Heart right ventricle (tissue), 16 donors: ENCODE measurements at regions of chr14 and their contacts with region 1.

Region 1: DNA sequence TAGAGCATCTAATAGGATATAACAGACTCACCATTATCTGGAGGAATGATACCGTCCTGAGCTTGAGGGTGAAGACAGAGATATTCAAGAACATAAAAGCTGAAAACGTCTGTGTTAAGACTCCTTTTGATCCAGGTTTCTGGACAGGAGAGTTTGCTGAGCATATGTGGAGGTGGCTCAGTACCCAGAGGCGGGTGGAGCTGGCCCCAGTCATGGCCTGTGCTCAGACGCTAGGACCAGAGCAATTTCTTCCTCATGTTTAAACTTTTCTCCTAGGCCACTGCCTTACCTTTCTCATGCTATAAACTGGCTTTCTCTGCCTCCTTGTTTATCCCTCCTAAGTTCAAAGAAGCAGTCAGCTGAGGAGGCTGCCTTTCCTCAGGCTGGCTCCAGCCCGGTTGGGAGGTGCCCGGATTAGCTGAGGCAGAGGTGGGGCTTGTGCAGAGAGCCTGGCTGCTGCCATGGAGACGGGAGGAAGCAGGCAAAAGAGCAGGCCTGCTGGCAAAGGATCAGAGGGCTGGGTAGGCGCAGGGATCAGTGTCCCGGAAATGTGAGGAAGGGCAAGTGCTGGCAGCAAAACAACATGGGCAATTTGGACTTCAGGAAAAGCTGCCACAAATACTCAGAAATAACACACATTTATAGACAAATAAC is 13.7 kb downstream of the COA8 start:
- DNase-seq: peak; percentile 86 to 92
- ATAC-seq: peak; percentile 93 to 98 (median 96)
- H3K4me3 ChIP-seq: peak overlapping the region in 1 of 10 donors; percentile 17
- H3K27ac ChIP-seq: peak overlapping the region in 9 of 10 donors; percentile 38 to 73 (median 60)
- H3K4me1 ChIP-seq: peaks cover 2 to 53% (median 25%) of the 10 kb centered on the region in 9 donors
- H3K27me3 ChIP-seq: no peaks in the 10 kb centered on the region
- CTCF ChIP-seq: no peak

Region 2: DNA sequence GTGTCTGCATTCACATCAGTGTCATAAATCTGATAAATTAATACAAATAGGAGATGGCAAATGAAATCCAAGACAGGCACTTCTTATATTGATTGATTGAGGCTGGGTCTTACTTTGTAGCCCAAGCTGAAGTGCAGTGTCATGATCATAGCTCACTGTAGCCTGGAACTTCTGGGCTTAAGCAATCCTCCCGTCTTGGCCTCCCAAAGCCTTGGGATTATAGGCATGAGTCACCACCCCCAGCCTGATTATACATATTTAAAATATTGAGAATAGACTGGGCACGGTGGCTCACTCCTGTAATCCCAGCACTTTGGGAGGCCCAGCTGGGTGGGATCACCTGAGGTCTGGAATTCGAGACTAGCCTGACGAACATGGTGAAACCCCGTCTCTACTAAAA is 140.0 kb before region 1 on chr14:
- intact Hi-C with region 1: no loop called
- DNase-seq: no peak
- ATAC-seq: no peak
- H3K4me3 ChIP-seq: no peak overlapping the region
- H3K27ac ChIP-seq: peak overlapping the region in 1 of 10 donors; percentile 37
- H3K4me1 ChIP-seq: peaks cover 3 to 61% (median 33%) of the 10 kb centered on the region in 9 donors
- H3K27me3 ChIP-seq: no peaks in the 10 kb centered on the region
- CTCF ChIP-seq: no peak

Region 3: GRCh38 chr14:103552011-103552845 is 24.3 kb before region 1 on chr14:
- intact Hi-C with region 1: no loop called
- DNase-seq: peak in 1 of 2 donors; percentile 49
- ATAC-seq: peak; percentile 12 to 63 (median 50)
- H3K4me3 ChIP-seq: peak overlapping the region in 5 of 10 donors; percentile 2 to 40 (median 30)
- H3K27ac ChIP-seq: peak overlapping the region; percentile 63 to 95 (median 88)
- H3K4me1 ChIP-seq: peaks cover 24 to 91% (median 63%) of the 10 kb centered on the region in 9 donors
- H3K27me3 ChIP-seq: no peaks in the 10 kb centered on the region
- CTCF ChIP-seq: no peak

Region 4: DNA sequence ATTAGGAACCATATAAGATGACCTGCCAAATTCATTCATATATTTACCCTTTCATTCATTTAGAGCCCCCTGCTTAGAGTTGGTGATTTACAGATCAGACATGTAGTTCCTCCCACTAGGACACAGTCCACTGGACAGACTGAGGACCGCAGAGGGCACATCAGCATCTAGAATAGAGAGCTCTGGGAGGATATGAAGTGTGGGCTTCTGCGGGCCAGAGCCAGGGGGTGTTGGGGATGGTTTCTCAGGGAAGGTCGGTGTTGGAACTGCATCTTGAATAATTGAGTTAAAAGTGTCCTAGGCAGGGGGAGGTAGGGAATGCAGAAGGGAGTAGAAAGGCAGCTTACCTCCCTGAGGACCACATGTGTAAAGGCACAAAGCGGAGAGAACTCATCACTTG is 95.4 kb after region 1 on chr14:
- intact Hi-C with region 1: loop called in 3 of 10 experiments (anchors 5 to 10 kb)
- DNase-seq: no peak
- ATAC-seq: no peak
- H3K4me3 ChIP-seq: no peak overlapping the region
- H3K27ac ChIP-seq: no peak overlapping the region
- H3K4me1 ChIP-seq: peaks cover 0 to 8% (median 0%) of the 10 kb centered on the region in 9 donors
- H3K27me3 ChIP-seq: no peaks in the 10 kb centered on the region
- CTCF ChIP-seq: no peak

Region 5: GRCh38 chr14:103688906-103689902 is 112.7 kb after region 1 on chr14:
- intact Hi-C with region 1: loop called in 1 of 10 experiments (anchors 10 kb)
- DNase-seq: no peak
- ATAC-seq: peak; percentile 48 to 73 (median 62)
- H3K4me3 ChIP-seq: no peak overlapping the region
- H3K27ac ChIP-seq: peak overlapping the region in 3 of 10 donors; percentile 3 to 56 (median 17)
- H3K4me1 ChIP-seq: peaks cover 0 to 61% (median 31%) of the 10 kb centered on the region in 9 donors
- H3K27me3 ChIP-seq: no peaks in the 10 kb centered on the region
- CTCF ChIP-seq: no peak

Region 6: DNA sequence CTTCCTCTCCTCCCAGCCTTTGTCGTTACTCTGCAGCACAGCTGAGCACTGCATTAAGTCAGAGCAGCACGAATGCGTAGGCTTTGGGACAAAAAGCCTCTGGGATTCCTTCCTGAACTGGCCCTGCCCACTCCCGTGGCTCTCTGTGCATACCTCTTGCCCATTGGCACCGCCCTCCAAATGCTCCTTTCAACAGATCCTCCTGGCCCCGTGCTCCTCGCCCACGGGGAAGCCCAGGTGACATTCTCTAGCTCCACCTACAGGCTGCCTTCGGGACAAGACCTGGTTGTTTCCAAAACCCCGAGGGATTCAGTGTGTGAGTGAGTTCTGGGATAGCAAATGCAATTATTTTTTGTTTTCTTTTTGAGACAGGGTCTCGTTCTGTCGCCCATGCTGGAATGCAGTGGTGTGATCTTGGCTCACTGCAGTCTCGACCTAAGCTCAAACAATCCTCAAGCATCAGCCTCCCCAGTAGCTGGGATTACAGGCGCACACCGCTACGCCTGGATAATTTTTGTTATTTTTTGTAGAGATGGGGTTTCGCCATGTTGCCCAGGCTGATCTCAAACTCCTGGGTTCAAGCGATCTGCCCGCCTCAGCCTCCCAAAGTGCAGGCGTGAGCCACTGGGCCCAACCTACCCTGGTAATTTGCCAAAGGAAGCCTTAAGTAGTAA is 333.9 kb after region 1 on chr14:
- intact Hi-C with region 1: loop called in 2 of 10 experiments (anchors 10 kb)
- DNase-seq: peak; percentile 71 to 82
- ATAC-seq: peak; percentile 83 to 97 (median 95)
- H3K4me3 ChIP-seq: peak overlapping the region in 4 of 10 donors; percentile 19 to 34 (median 23)
- H3K27ac ChIP-seq: peak overlapping the region in 6 of 10 donors; percentile 4 to 53 (median 38)
- H3K4me1 ChIP-seq: peaks cover 0 to 14% (median 12%) of the 10 kb centered on the region in 9 donors
- H3K27me3 ChIP-seq: no peaks in the 10 kb centered on the region
- CTCF ChIP-seq: peak; percentile 76 to 91 (median 81)